Calu3 (cell line): ENCODE measurements at regions of chr10 and their contacts with region 1.

Region 1: GRCh38 chr10:57657164-57657765 is 610.4 kb downstream of the IPMK start:
- DNase-seq: peak; percentile 75
- H3K4me3 Mint-ChIP-seq: no peak overlapping the region
- H3K27ac Mint-ChIP-seq: no peak overlapping the region
- H3K4me1 Mint-ChIP-seq: no peaks in the 10 kb centered on the region
- H3K27me3 Mint-ChIP-seq: no peaks in the 10 kb centered on the region
- CTCF ChIP-seq: peak; percentile 94

Region 2: DNA sequence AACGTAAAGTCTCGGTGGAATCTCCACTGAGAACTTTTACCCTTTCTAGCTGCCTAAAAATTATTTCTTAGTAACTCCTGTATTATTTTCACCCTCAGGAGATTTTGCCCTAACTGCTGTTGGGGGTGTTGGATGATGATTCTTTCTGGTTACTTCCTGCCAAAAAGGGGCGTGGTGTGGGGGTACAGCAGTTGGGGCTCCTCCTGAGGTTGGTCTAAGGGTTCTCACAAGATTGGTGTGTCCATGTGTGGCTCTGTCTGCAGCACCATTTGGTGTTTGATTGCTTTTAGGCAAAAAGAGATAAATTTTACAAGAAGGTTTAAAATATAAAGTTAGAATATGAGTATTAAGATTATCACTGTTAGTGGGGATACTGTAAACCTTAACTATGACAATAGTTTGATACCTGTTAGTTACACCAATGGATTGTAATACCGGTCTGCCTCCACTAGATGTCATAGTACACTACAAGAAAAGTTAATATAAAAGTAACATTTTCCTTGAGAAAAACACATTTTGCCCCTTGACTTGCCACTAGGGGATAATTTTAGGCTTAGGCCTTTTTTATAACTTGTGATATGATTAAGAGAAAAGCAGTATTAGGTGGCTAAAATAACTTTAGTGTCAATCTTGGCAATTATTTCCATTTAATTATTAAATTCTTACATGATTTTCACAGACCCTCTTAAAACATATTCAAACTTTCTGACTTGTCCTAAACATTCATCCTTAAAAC is 318.3 kb before region 1 on chr10:
- CTCF ChIA-PET with region 1: no interaction called
- intact Hi-C with region 1: loop called (anchors 2 kb)
- DNase-seq: peak; percentile 45
- H3K4me3 Mint-ChIP-seq: no peak overlapping the region
- H3K27ac Mint-ChIP-seq: no peak overlapping the region
- H3K4me1 Mint-ChIP-seq: no peaks in the 10 kb centered on the region
- H3K27me3 Mint-ChIP-seq: no peaks in the 10 kb centered on the region
- CTCF ChIP-seq: peak; percentile 79

Region 3: GRCh38 chr10:57351076-57351475 is 306.2 kb before region 1 on chr10:
- CTCF ChIA-PET with region 1: no interaction called
- intact Hi-C with region 1: no loop called
- DNase-seq: no peak
- H3K4me3 Mint-ChIP-seq: no peak overlapping the region
- H3K27ac Mint-ChIP-seq: no peak overlapping the region
- H3K4me1 Mint-ChIP-seq: no peaks in the 10 kb centered on the region
- H3K27me3 Mint-ChIP-seq: no peaks in the 10 kb centered on the region
- CTCF ChIP-seq: no peak

Region 4: DNA sequence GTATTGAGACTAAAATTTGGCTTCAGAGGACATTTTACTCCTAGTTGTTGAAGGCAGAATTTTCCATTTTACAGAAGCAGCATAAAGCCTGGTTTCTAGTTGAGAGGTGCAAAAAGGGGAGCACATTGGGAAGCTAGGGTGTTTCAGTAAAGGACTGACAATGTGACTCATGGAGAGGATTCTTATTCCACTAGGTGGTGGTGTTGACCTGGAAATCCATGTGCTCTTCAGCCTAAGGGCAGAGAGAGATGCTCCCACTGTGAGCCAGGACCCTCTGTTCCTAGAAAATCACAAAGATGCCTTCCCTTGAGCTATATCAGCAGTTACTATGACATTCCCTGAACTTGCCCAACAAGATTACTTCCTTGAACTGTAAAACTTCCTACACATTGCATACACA is 77.3 kb before region 1 on chr10:
- CTCF ChIA-PET with region 1: interaction called, 14 read pairs
- intact Hi-C with region 1: loop called (anchors 1 kb)
- DNase-seq: peak; percentile 51
- H3K4me3 Mint-ChIP-seq: no peak overlapping the region
- H3K27ac Mint-ChIP-seq: peak overlapping the region; percentile 42
- H3K4me1 Mint-ChIP-seq: no peaks in the 10 kb centered on the region
- H3K27me3 Mint-ChIP-seq: no peaks in the 10 kb centered on the region
- CTCF ChIP-seq: peak; percentile 62

Region 5: DNA sequence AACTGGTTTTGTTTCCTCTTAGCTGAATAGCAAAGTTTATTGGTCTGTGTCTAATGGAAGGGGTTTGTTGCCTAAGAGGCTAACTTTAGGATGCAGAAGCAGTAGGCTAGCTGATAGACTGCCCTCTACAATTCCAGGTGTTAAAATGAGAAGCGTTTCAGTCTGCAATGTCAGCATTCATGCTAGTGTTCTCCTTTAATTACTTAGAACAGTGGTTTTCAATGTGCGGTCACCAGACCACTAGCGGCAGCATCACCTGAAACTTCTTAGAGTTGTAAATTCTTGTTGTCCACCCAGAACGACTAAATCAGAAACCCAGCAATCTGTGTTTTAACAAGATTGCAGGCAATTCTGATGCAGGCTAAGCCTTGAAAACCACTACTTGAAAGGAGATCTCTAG is 217.5 kb after region 1 on chr10:
- CTCF ChIA-PET with region 1: no interaction called
- intact Hi-C with region 1: no loop called
- DNase-seq: no peak
- H3K4me3 Mint-ChIP-seq: no peak overlapping the region
- H3K27ac Mint-ChIP-seq: no peak overlapping the region
- H3K4me1 Mint-ChIP-seq: peaks cover 40% of the 10 kb centered on the region
- H3K27me3 Mint-ChIP-seq: no peaks in the 10 kb centered on the region
- CTCF ChIP-seq: no peak